BJ (cell line): ENCODE measurements at regions of chr16 and their contacts with region 1.

Region 1: GRCh38 chr16:71461686-71462648 is at the start of gene ZNF23:
- DNase-seq: no peak
- H3K4me3 ChIP-seq: peak within 1 kb of the TSS; percentile 98
- H3K27me3 ChIP-seq: no peaks in the 10 kb centered on the region
- CTCF ChIP-seq: no peak
- polyA plus RNA-seq, gene ZNF23: 10.8 and 11.8 TPM in 2 replicates

Region 2: GRCh38 chr16:70444249-70445063 is 1017.5 kb before region 1 on chr16:
- CTCF ChIA-PET with region 1: no interaction called
- POLR2A ChIA-PET with region 1: no interaction called
- DNase-seq: no peak
- H3K4me3 ChIP-seq: no peak overlapping the region
- H3K27me3 ChIP-seq: no peaks in the 10 kb centered on the region
- CTCF ChIP-seq: no peak

Region 3: DNA sequence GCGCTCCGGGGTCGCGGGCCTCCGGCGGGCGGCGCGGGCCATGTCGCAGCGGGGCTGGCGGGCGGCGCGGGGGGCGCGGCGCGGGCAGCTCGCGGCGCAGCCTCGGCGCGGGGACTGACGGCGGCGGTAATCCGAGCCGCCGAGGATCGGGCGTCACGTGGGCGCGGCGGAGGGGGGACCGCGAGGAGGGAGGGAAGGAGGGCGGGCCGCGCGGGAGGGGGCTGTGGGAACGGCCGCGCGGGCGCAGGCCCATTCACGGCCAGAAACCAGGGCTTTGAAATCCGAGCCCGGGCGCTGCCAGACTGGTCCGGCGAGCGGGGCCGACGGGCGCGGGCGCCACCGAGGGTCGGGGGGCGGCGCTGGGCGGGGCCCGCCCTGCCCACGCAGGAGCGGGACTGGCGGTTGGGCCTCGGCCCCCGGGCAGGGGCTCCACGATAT is 776.0 kb before region 1 on chr16 and contains the start of gene MTSS2:
- CTCF ChIA-PET with region 1: no interaction called
- POLR2A ChIA-PET with region 1: interaction called, 21 read pairs
- DNase-seq: no peak
- H3K4me3 ChIP-seq: peak within 1 kb of the TSS; percentile 92
- H3K27me3 ChIP-seq: no peaks in the 10 kb centered on the region
- CTCF ChIP-seq: no peak
- polyA plus RNA-seq, gene MTSS2: 86.4 and 170 TPM in 2 replicates